ENCODE measurements at regions of chr5 and their contacts with region 1.

Region 1: GRCh38 chr5:173733831-173734501 is 117.5 kb upstream of the BOD1 start:
- DNase-seq: peak; percentile 41
- ATAC-seq: peak; percentile 79
- H3K4me3 Mint-ChIP-seq: peak overlapping the region; percentile 58
- H3K27ac Mint-ChIP-seq: peak overlapping the region; percentile 90
- H3K4me1 Mint-ChIP-seq: peaks cover 64% of the 10 kb centered on the region
- H3K27me3 Mint-ChIP-seq: no peaks in the 10 kb centered on the region
- CTCF ChIP-seq: no peak

Region 2: DNA sequence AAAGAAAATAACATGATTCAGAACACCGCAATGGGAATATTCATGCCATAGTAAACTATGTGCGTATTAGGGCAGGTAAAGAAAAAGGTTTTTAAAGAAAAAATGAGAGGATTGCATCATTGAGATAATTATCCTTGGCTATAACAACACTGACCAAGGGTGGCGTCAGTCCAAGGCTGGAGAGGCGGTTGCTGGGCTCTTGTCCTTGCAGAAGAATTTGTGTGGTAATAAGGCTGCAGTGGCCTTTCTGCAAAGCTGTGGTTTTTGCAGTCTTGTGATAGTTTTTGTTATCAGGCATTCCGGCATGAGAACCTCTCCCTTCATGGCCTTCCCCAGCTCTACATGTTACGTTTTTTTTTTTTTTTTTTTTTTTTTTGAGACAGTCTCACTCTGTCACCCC is 131.5 kb before region 1 on chr5:
- CTCF ChIA-PET with region 1: no interaction called
- POLR2A ChIA-PET with region 1: no interaction called
- intact Hi-C with region 1: no loop called
- DNase-seq: no peak
- ATAC-seq: no peak
- H3K4me3 Mint-ChIP-seq: no peak overlapping the region
- H3K27ac Mint-ChIP-seq: no peak overlapping the region
- H3K4me1 Mint-ChIP-seq: no peaks in the 10 kb centered on the region
- H3K27me3 Mint-ChIP-seq: no peaks in the 10 kb centered on the region
- CTCF ChIP-seq: no peak

Region 3: GRCh38 chr5:173679909-173680630 is 53.9 kb before region 1 on chr5:
- CTCF ChIA-PET with region 1: interaction called, 3 read pairs
- POLR2A ChIA-PET with region 1: interaction called, 3 read pairs
- intact Hi-C with region 1: loop called (anchors 2 kb)
- DNase-seq: no peak
- ATAC-seq: peak; percentile 54
- H3K4me3 Mint-ChIP-seq: peak overlapping the region; percentile 44
- H3K27ac Mint-ChIP-seq: peak overlapping the region; percentile 86
- H3K4me1 Mint-ChIP-seq: peaks cover 47% of the 10 kb centered on the region
- H3K27me3 Mint-ChIP-seq: no peaks in the 10 kb centered on the region
- CTCF ChIP-seq: no peak

Region 4: GRCh38 chr5:173697931-173698579 is 35.9 kb before region 1 on chr5:
- CTCF ChIA-PET with region 1: no interaction called
- POLR2A ChIA-PET with region 1: no interaction called
- intact Hi-C with region 1: loop called (anchors 5 kb)
- DNase-seq: no peak
- ATAC-seq: peak; percentile 35
- H3K4me3 Mint-ChIP-seq: peak overlapping the region; percentile 24
- H3K27ac Mint-ChIP-seq: peak overlapping the region; percentile 36
- H3K4me1 Mint-ChIP-seq: peaks cover 38% of the 10 kb centered on the region
- H3K27me3 Mint-ChIP-seq: no peaks in the 10 kb centered on the region
- CTCF ChIP-seq: no peak

Region 5: GRCh38 chr5:173707392-173707791 is 26.6 kb before region 1 on chr5:
- CTCF ChIA-PET with region 1: no interaction called
- POLR2A ChIA-PET with region 1: interaction called, 10 read pairs
- intact Hi-C with region 1: loop called (anchors 1 kb)
- DNase-seq: peak; percentile 29
- ATAC-seq: peak; percentile 98
- H3K4me3 Mint-ChIP-seq: peak overlapping the region; percentile 4
- H3K27ac Mint-ChIP-seq: peak overlapping the region; percentile 60
- H3K4me1 Mint-ChIP-seq: peaks cover 27% of the 10 kb centered on the region
- H3K27me3 Mint-ChIP-seq: no peaks in the 10 kb centered on the region
- CTCF ChIP-seq: no peak

Region 6: DNA sequence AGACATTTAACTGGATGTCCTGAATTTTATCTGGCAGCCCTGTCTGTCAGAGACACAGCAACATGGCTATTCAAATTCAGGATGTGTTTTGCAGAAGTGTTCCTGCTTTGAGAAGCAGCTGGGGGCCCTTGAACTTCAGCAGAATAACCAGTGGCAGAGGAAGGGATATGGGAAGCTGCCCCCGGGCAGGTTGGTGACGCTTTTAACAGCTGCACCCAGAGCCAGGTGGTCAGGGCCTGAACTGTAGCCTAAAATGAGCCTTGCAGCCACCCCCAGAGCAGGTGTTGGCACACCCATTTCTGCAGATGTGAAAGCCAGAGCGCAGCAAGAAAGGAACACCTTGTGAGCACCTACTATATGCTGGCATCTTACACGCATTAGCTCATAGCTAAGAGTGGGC is 11.2 kb after region 1 on chr5:
- CTCF ChIA-PET with region 1: interaction called, 5 read pairs
- POLR2A ChIA-PET with region 1: interaction called, 13 read pairs
- intact Hi-C with region 1: loop called (anchors 1 kb)
- DNase-seq: peak; percentile 33
- ATAC-seq: peak; percentile 70
- H3K4me3 Mint-ChIP-seq: peak overlapping the region; percentile 29
- H3K27ac Mint-ChIP-seq: peak overlapping the region; percentile 80
- H3K4me1 Mint-ChIP-seq: peaks cover 60% of the 10 kb centered on the region
- H3K27me3 Mint-ChIP-seq: no peaks in the 10 kb centered on the region
- CTCF ChIP-seq: no peak

Region 7: GRCh38 chr5:173755319-173755718 is 21.4 kb after region 1 on chr5:
- CTCF ChIA-PET with region 1: no interaction called
- POLR2A ChIA-PET with region 1: no interaction called
- intact Hi-C with region 1: no loop called
- DNase-seq: no peak
- ATAC-seq: no peak
- H3K4me3 Mint-ChIP-seq: no peak overlapping the region
- H3K27ac Mint-ChIP-seq: no peak overlapping the region
- H3K4me1 Mint-ChIP-seq: peaks cover 18% of the 10 kb centered on the region
- H3K27me3 Mint-ChIP-seq: no peaks in the 10 kb centered on the region
- CTCF ChIP-seq: no peak

Region 8: GRCh38 chr5:173823711-173824528 is 90.0 kb after region 1 on chr5:
- CTCF ChIA-PET with region 1: no interaction called
- POLR2A ChIA-PET with region 1: interaction called, 7 read pairs
- intact Hi-C with region 1: loop called (anchors 1 kb)
- DNase-seq: no peak
- ATAC-seq: no peak
- H3K4me3 Mint-ChIP-seq: no peak overlapping the region
- H3K27ac Mint-ChIP-seq: peak overlapping the region; percentile 42
- H3K4me1 Mint-ChIP-seq: peaks cover 86% of the 10 kb centered on the region
- H3K27me3 Mint-ChIP-seq: no peaks in the 10 kb centered on the region
- CTCF ChIP-seq: no peak

Measured in activated B cell treated with CpG ODN at 0.5 μM for 24 hours (primary cell).